ENCODE measurements at regions of chr1 and their contacts with region 1.

Region 1: GRCh38 chr1:226332947-226333346 is 24.0 kb upstream of the LIN9 start:
- DNase-seq: no peak
- H3K4me3 Mint-ChIP-seq: peak overlapping the region; percentile 58
- H3K27ac Mint-ChIP-seq: peak overlapping the region; percentile 68
- H3K4me1 Mint-ChIP-seq: peaks cover 10% of the 10 kb centered on the region
- H3K27me3 Mint-ChIP-seq: no peaks in the 10 kb centered on the region
- CTCF ChIP-seq: no peak

Region 2: DNA sequence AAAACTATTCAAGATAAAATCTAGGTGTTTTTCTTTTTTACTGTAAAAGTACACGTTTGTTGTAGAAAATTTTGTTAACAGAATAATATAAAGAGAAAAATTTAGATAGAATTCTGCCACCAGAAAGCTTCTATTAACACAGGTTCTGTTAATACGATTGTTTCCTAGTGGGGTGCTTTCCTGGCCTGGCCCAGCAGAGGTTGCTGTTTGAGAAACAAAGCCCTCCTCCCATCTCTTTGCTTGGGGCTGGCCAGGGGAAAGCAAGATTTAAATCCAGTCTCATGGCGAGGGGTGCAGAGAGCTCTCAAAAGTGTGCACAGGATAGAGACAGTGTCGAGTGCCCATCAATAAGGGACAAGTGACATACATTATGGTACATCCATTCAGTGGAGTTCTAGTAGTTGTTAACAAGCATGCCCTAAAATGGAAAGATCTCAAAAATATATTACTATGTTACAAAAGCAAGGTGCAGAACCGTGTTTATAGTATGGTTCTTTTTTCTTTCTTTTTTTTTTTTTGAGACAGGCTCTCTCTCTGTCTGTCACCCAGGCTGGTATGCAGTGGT is 131.8 kb before region 1 on chr1:
- CTCF ChIA-PET with region 1: interaction called, 4 read pairs
- intact Hi-C with region 1: loop called (anchors 10 kb)
- DNase-seq: peak; percentile 19
- H3K4me3 Mint-ChIP-seq: no peak overlapping the region
- H3K27ac Mint-ChIP-seq: no peak overlapping the region
- H3K4me1 Mint-ChIP-seq: no peaks in the 10 kb centered on the region
- H3K27me3 Mint-ChIP-seq: no peaks in the 10 kb centered on the region
- CTCF ChIP-seq: peak; percentile 9

Region 3: DNA sequence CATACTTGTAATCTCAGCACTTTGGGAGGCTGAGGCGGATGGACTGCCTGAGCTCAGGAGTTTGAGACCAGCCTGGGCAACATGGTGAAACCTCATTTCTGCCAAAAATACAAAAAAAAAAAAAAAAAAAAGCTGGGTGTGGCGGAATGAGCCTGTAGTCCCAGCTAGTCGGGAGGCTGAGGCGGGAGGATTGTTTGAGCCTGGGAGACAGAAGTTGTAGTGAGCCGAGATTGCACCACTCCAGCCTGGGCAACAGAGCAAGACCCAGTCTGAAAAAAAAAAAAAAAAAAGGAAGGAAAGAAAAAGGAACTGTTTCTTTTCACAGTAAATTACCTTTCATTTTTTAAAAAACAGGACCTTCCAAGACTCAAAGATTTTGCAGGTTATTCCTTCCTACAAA is 53.4 kb before region 1 on chr1:
- CTCF ChIA-PET with region 1: no interaction called
- intact Hi-C with region 1: no loop called
- DNase-seq: no peak
- H3K4me3 Mint-ChIP-seq: no peak overlapping the region
- H3K27ac Mint-ChIP-seq: no peak overlapping the region
- H3K4me1 Mint-ChIP-seq: no peaks in the 10 kb centered on the region
- H3K27me3 Mint-ChIP-seq: no peaks in the 10 kb centered on the region
- CTCF ChIP-seq: no peak

Region 4: DNA sequence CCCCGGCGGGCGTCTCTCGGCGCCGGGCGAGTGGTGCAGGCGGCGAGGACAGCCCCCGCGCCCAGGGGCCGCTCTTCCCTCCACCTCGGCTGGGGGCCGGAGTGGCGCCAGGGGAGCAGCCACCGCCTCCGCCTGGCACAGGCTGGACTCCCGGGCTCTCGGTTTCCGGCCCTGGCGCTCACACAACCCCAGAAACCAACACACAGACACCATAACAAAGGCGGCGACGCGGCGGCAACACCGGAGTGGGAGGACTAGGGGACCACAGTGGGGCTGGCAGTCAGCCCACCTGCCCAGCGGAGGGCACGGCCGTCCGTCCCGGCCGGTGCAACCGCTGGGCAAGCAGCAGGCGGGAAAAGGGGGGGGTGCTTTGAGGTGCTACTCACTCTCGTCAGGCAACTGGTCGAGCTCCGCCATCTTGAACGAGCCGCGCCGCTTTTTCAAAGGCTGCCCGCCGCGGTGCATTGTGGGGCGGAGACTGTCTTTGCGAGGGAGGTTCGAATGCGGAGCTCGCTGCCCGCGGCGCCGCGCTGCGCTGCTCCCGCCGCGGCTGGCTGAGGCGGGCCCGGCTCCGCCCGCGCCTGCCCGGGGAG is 24.1 kb before region 1 on chr1 and contains the start of gene LIN9:
- CTCF ChIA-PET with region 1: interaction called, 10 read pairs
- intact Hi-C with region 1: no loop called
- DNase-seq: peak; percentile 96
- H3K4me3 Mint-ChIP-seq: peak within 1 kb of the TSS; percentile 84
- H3K27ac Mint-ChIP-seq: peak within 1 kb of the TSS; percentile 31
- H3K4me1 Mint-ChIP-seq: peaks cover 19% of the 10 kb centered on the region
- H3K27me3 Mint-ChIP-seq: no peaks in the 10 kb centered on the region
- CTCF ChIP-seq: no peak
- total RNA-seq, gene LIN9: 13.6 and 14.3 TPM in 2 replicates